HCT116 (cell line): ENCODE measurements at regions of chr17 and their contacts with region 1.

Region 1: DNA sequence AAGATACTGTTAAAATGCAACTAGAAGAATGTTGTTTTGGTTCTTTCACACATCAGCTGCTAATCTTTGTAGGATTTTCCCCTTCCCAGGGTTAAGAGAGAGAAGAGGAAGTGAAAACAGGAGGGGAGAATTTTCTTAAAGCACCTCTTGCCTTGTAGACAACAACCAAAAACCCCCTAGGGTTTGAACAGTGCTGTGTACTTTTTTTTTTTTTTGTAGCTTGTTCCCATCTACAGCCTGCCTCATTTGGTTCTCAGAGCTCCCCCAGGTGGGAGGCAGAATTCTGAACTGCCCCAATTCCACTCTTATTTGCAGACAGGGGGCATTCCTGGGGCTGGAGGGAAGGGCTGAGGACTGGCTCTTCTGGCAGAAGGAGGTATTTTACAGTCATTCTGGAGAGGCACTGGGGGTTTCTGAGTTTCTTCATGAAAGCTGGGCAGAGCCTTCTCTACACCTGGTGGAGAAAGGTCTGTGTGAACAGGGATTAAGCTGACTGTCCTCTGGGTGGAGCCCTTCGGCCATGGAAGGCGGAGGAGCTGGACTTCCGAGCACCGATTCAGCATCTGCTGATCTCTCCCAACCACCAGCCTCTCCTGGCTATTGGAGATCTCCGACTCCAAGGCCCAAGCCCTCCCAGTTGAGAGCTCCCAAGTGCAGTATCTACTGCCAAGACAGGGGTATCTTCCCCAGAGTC is 32.2 kb downstream of the SMARCE1 start:
- DNase-seq: peak; percentile 69
- ATAC-seq: peak; percentile 90
- H3K4me3 ChIP-seq: no peak overlapping the region
- H3K27ac ChIP-seq: no peak overlapping the region
- H3K4me1 ChIP-seq: peaks cover 1 to 17% of the 10 kb centered on the region in 2 experiments; a peak in 3 of 4 replicates
- H3K27me3 ChIP-seq: no peaks in the 10 kb centered on the region
- CTCF ChIP-seq: peak; percentile 72 to 95 (median 75)
- POLR2A ChIP-seq: no peak
- RAD21 ChIP-seq: peak; percentile 87

Region 2: GRCh38 chr17:40510328-40510648 is 105.2 kb before region 1 on chr17:
- CTCF ChIA-PET with region 1: no interaction called
- POLR2A ChIA-PET with region 1: no interaction called
- RAD21 ChIA-PET with region 1: no interaction called
- intact Hi-C with region 1: no loop called
- DNase-seq: peak; percentile 85
- ATAC-seq: peak; percentile 85
- H3K4me3 ChIP-seq: peak overlapping the region in 1 of 2 experiments; percentile 23; a peak in 1 of 4 replicates
- H3K27ac ChIP-seq: peak overlapping the region; percentile 47; the same call in 1 of the 2 replicates
- H3K4me1 ChIP-seq: peaks cover 44 to 67% of the 10 kb centered on the region in 2 experiments
- H3K27me3 ChIP-seq: no peaks in the 10 kb centered on the region
- CTCF ChIP-seq: no peak
- POLR2A ChIP-seq: no peak
- RAD21 ChIP-seq: no peak

Region 3: DNA sequence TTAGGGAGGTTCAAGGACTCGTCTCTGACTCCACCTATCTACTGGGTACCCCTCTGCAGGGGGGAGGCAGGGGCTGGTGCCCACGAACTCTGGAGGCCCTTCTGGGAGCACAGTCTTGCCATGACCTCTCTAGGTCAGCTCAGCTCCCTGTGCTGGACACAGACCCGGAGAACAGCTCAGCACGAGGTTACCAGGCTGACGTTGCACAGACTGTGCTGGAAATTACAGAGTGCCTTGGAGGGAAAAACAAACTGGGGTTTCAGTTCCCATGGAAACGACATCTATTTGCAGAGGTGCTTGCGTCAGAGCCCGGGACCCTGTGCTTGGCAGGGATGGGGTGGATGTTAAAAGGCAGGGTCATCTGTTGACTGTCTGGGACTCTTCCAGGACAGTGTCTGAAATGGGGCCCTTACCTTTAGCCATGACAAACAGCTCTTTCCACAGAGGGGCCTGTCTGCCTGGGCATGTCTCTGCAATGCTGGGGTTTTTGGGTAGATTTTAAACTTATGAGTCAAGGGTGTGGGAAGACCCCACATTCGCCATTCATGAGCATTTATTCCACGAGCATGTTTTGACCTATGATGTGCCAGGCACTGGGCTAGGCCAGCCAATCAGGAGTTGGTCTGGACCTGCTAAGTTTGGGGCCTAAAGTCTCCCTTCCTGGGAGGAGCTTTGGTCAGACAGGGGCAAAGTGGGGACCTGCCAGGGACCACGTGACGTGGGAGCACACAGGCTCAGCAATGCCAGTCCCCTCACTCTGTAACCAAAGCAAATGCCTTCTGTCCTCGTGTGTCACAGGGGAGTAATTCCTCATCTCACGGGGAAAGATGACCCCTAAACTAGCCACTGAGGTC is 72.7 kb before region 1 on chr17:
- CTCF ChIA-PET with region 1: no interaction called
- POLR2A ChIA-PET with region 1: no interaction called
- RAD21 ChIA-PET with region 1: no interaction called
- intact Hi-C with region 1: no loop called
- DNase-seq: no peak
- ATAC-seq: no peak
- H3K4me3 ChIP-seq: no peak overlapping the region
- H3K27ac ChIP-seq: no peak overlapping the region
- H3K4me1 ChIP-seq: peaks cover 11 to 17% of the 10 kb centered on the region in 2 experiments
- H3K27me3 ChIP-seq: no peaks in the 10 kb centered on the region
- CTCF ChIP-seq: no peak
- POLR2A ChIP-seq: no peak
- RAD21 ChIP-seq: no peak

Region 4: GRCh38 chr17:40629842-40630241 is 14.4 kb after region 1 on chr17:
- CTCF ChIA-PET with region 1: interaction called, 13 read pairs
- POLR2A ChIA-PET with region 1: interaction called, 3 read pairs
- RAD21 ChIA-PET with region 1: no interaction called
- intact Hi-C with region 1: no loop called
- DNase-seq: no peak
- ATAC-seq: no peak
- H3K4me3 ChIP-seq: no peak overlapping the region
- H3K27ac ChIP-seq: no peak overlapping the region
- H3K4me1 ChIP-seq: no peaks in the 10 kb centered on the region
- H3K27me3 ChIP-seq: no peaks in the 10 kb centered on the region
- CTCF ChIP-seq: no peak
- POLR2A ChIP-seq: no peak
- RAD21 ChIP-seq: no peak

Region 5: GRCh38 chr17:40791787-40792436 is 176.5 kb after region 1 on chr17:
- CTCF ChIA-PET with region 1: interaction called, 29 read pairs
- POLR2A ChIA-PET with region 1: interaction called, 5 read pairs
- RAD21 ChIA-PET with region 1: interaction called in 1 of 2 experiments, 3 read pairs
- intact Hi-C with region 1: loop called (anchors 1 kb)
- DNase-seq: peak; percentile 41
- ATAC-seq: peak; percentile 68
- H3K4me3 ChIP-seq: no peak overlapping the region
- H3K27ac ChIP-seq: no peak overlapping the region
- H3K4me1 ChIP-seq: no peaks in the 10 kb centered on the region
- H3K27me3 ChIP-seq: no peaks in the 10 kb centered on the region
- CTCF ChIP-seq: peak; percentile 66 to 86 (median 75)
- POLR2A ChIP-seq: no peak
- RAD21 ChIP-seq: peak; percentile 70